Esophagus squamous epithelium (tissue), 5 donors: ENCODE measurements at regions of chr3 and their contacts with region 1.

Region 1: GRCh38 chr3:58568572-58569286 is 8.5 kb downstream of the FAM107A start:
- DNase-seq: peak; percentile 9
- H3K4me3 ChIP-seq: no peak overlapping the region
- H3K27ac ChIP-seq: no peak overlapping the region
- H3K4me1 ChIP-seq: peaks cover 0 to 25% (median 0%) of the 10 kb centered on the region in 3 donors
- H3K27me3 ChIP-seq: no peaks in the 10 kb centered on the region
- CTCF ChIP-seq: peak; percentile 82 to 95 (median 89)
- POLR2A ChIP-seq: no peak

Region 2: GRCh38 chr3:58630076-58630709 is 61.5 kb after region 1 on chr3:
- intact Hi-C with region 1: loop called (anchors 5 kb)
- DNase-seq: no peak
- H3K4me3 ChIP-seq: no peak overlapping the region
- H3K27ac ChIP-seq: peak overlapping the region in 3 of 4 donors; percentile 69 to 82 (median 69)
- H3K4me1 ChIP-seq: peaks cover 6 to 39% (median 27%) of the 10 kb centered on the region in 3 donors
- H3K27me3 ChIP-seq: no peaks in the 10 kb centered on the region
- CTCF ChIP-seq: peak; percentile 90 to 98 (median 94)
- POLR2A ChIP-seq: no peak